CD8-positive, alpha-beta memory T cell (primary cell): ENCODE measurements at regions of chr17 and their contacts with region 1.

Region 1: DNA sequence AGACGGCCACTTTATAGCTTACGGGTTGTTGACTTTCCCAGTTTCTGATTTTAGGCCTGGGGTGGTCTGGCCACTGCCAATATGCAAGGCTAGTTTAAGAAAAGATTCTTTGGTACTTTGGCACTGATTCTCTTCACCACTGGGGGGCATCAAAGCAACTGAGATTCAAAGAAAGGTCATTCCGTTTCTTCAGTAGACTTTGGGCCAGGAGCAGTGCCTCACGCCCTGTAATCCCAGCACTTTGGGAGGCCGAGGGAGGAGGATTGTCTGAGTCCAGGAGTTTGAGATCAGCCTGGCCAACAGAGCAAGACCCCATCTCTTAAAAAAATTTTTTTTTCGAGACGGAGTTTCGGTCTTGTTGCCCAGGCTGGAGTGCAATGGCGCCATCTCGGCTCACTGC is 53.0 kb downstream of the RPA1 start:
- DNase-seq: peak in 2 of 5 donors; percentile 16 to 26
- H3K4me3 ChIP-seq: no peak overlapping the region
- H3K4me3 Mint-ChIP-seq: no peak overlapping the region
- H3K27ac ChIP-seq: no peak overlapping the region
- H3K27ac Mint-ChIP-seq: peak overlapping the region in 1 of 8 donors; percentile 31
- H3K4me1 ChIP-seq: no peaks in the 10 kb centered on the region
- H3K4me1 Mint-ChIP-seq: no peaks in the 10 kb centered on the region
- H3K27me3 ChIP-seq: no peaks in the 10 kb centered on the region
- H3K27me3 Mint-ChIP-seq: no peaks in the 10 kb centered on the region

Region 2: GRCh38 chr17:1904273-1905182 is 21.7 kb after region 1 on chr17:
- CTCF ChIA-PET with region 1: no interaction called
- POLR2A ChIA-PET with region 1: no interaction called
- DNase-seq: no peak
- H3K4me3 ChIP-seq: no peak overlapping the region
- H3K4me3 Mint-ChIP-seq: no peak overlapping the region
- H3K27ac ChIP-seq: no peak overlapping the region
- H3K27ac Mint-ChIP-seq: no peak overlapping the region
- H3K4me1 ChIP-seq: peaks cover 9% of the 10 kb centered on the region
- H3K4me1 Mint-ChIP-seq: peaks cover 4 to 14% (median 6%) of the 10 kb centered on the region in 3 donors
- H3K27me3 ChIP-seq: peaks cover 20% of the 10 kb centered on the region
- H3K27me3 Mint-ChIP-seq: peaks cover 22 to 45% of the 10 kb centered on the region in 2 donors

Region 3: GRCh38 chr17:2149934-2150333 is 267.1 kb after region 1 on chr17:
- CTCF ChIA-PET with region 1: no interaction called
- POLR2A ChIA-PET with region 1: interaction called, 12 read pairs
- DNase-seq: no peak
- H3K4me3 ChIP-seq: no peak overlapping the region
- H3K4me3 Mint-ChIP-seq: no peak overlapping the region
- H3K27ac ChIP-seq: no peak overlapping the region
- H3K27ac Mint-ChIP-seq: no peak overlapping the region
- H3K4me1 ChIP-seq: no peaks in the 10 kb centered on the region
- H3K4me1 Mint-ChIP-seq: peaks cover 9 to 11% (median 10%) of the 10 kb centered on the region in 3 donors
- H3K27me3 ChIP-seq: no peaks in the 10 kb centered on the region
- H3K27me3 Mint-ChIP-seq: no peaks in the 10 kb centered on the region